ENCODE measurements at regions of chr12 and their contacts with region 1.

Region 1: DNA sequence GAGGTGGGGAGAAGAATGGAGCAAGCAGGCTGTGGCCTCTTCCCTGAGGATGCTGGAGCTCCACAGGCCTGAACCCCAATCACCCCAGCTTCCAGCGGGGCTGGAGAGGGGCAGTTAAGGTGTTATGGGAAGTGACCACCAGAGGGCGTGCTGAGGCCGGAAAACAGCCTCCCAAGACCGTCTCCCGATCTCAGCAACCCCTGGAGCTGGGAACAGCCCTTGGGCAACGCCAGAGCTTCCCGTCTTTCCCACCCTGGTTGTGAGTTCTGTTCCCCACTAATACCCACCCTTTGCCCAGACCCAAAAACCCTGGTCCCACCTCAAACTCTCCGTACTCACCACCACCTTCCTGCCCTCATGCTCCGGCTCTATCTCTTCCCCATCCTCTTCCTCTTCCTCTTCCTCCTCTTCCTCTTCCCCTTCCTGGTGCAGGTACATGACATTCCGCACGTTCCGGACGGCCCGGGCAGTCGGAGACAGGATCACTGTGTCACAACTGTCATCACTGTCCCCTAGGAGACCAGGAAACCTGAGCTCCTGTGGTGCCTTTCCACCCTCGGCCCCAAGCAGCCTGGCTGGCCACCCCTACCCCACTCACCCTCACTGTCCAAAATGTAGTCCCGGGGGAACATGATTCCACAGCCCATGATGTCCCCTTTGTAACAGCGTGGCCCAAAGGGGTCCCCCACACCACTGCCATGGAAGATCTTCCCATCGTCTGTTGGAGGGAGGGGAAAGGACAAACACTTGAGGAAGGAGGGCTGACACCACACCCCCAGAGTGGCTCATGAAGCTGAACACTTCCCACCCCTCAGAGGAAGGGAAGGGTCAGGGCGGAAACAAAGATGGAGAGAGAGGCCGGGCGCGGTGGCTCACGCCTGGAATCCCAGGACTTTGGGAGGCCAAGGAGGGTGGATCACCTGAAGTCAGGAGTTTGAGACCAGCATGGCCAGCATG is 12.9 kb downstream of the SPRYD3 start:
- DNase-seq: peak; percentile 48 to 64 (median 57)
- H3K4me3 ChIP-seq: no peak overlapping the region
- H3K4me3 Mint-ChIP-seq: no peak overlapping the region
- H3K27ac ChIP-seq: no peak overlapping the region
- H3K27ac Mint-ChIP-seq: peak overlapping the region in 6 of 7 donors; percentile 54 to 89 (median 68)
- H3K4me1 ChIP-seq: peaks cover 7% of the 10 kb centered on the region
- H3K4me1 Mint-ChIP-seq: peaks cover 9 to 19% (median 12%) of the 10 kb centered on the region in 4 donors
- H3K27me3 ChIP-seq: no peaks in the 10 kb centered on the region
- H3K27me3 Mint-ChIP-seq: no peaks in the 10 kb centered on the region

Region 2: GRCh38 chr12:53047221-53048042 is 18.8 kb before region 1 on chr12:
- CTCF ChIA-PET with region 1: interaction called, 11 read pairs
- POLR2A ChIA-PET with region 1: interaction called, 7 read pairs
- intact Hi-C with region 1: no loop called
- DNase-seq: peak; percentile 65 to 82 (median 73)
- H3K4me3 ChIP-seq: no peak overlapping the region
- H3K4me3 Mint-ChIP-seq: peak overlapping the region in 7 of 8 donors; percentile 45 to 66 (median 58)
- H3K27ac ChIP-seq: peak overlapping the region; percentile 69
- H3K27ac Mint-ChIP-seq: peak overlapping the region; percentile 25 to 97 (median 68)
- H3K4me1 ChIP-seq: peaks cover 14% of the 10 kb centered on the region
- H3K4me1 Mint-ChIP-seq: peaks cover 5 to 19% (median 12%) of the 10 kb centered on the region in 4 donors
- H3K27me3 ChIP-seq: no peaks in the 10 kb centered on the region
- H3K27me3 Mint-ChIP-seq: no peaks in the 10 kb centered on the region

Region 3: GRCh38 chr12:53079226-53080117 is 13.2 kb after region 1 on chr12 and contains the start of gene SPRYD3:
- CTCF ChIA-PET with region 1: interaction called, 74 read pairs
- POLR2A ChIA-PET with region 1: interaction called, 36 read pairs
- intact Hi-C with region 1: no loop called
- DNase-seq: peak; percentile 96 to 99 (median 97)
- H3K4me3 ChIP-seq: peak within 1 kb of the TSS; percentile 73
- H3K4me3 Mint-ChIP-seq: peak within 1 kb of the TSS; percentile 89 to 97 (median 94)
- H3K27ac ChIP-seq: peak within 1 kb of the TSS; percentile 83
- H3K27ac Mint-ChIP-seq: peak within 1 kb of the TSS; percentile 92 to 98 (median 95)
- H3K4me1 ChIP-seq: peaks cover 29% of the 10 kb centered on the region
- H3K4me1 Mint-ChIP-seq: peaks cover 23 to 61% (median 39%) of the 10 kb centered on the region in 4 donors
- H3K27me3 ChIP-seq: no peaks in the 10 kb centered on the region
- H3K27me3 Mint-ChIP-seq: no peaks in the 10 kb centered on the region
- total RNA-seq, gene SPRYD3: 54.3 to 59.3 TPM

Region 4: DNA sequence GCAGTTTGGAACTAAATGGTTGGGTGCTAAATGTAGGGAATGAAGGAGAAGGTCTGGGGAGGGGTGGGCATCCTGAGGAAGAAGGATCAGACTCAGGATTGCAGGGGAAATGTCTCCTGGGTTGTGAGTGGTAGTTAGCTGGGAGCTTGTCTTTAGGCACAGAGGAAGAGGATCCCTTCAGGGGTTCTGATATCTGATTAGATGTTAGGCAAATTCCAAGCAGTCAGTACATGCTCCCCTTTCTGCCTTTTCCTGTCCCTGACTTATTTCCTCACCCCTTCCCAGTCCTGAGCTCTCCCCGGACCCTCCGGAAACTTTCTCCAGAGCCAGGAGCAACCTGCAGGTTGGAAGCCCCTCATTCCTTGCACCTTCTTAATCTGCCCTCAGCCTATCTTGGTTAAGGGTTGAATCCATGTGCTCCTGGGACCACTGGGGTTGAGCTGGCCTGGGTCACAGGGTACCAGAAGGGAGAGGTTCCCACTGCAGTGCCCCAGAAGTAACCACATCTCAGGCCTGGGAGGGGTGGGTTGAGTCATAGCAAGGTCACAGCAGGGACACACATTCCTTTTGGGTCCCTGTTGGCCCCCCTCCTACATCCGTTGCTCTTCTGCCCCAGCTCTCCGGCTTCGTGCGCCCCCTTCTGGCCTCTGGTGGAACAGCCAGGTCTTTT is 32.9 kb after region 1 on chr12:
- CTCF ChIA-PET with region 1: interaction called, 511 read pairs
- POLR2A ChIA-PET with region 1: interaction called, 26 read pairs
- intact Hi-C with region 1: loop called (anchors 1 kb)
- DNase-seq: peak; percentile 82 to 90 (median 84)
- H3K4me3 ChIP-seq: no peak overlapping the region
- H3K4me3 Mint-ChIP-seq: peak overlapping the region; percentile 39 to 93 (median 62)
- H3K27ac ChIP-seq: no peak overlapping the region
- H3K27ac Mint-ChIP-seq: peak overlapping the region; percentile 68 to 89 (median 85)
- H3K4me1 ChIP-seq: peaks cover 48% of the 10 kb centered on the region
- H3K4me1 Mint-ChIP-seq: peaks cover 36 to 58% (median 47%) of the 10 kb centered on the region in 4 donors
- H3K27me3 ChIP-seq: no peaks in the 10 kb centered on the region
- H3K27me3 Mint-ChIP-seq: no peaks in the 10 kb centered on the region

Region 5: DNA sequence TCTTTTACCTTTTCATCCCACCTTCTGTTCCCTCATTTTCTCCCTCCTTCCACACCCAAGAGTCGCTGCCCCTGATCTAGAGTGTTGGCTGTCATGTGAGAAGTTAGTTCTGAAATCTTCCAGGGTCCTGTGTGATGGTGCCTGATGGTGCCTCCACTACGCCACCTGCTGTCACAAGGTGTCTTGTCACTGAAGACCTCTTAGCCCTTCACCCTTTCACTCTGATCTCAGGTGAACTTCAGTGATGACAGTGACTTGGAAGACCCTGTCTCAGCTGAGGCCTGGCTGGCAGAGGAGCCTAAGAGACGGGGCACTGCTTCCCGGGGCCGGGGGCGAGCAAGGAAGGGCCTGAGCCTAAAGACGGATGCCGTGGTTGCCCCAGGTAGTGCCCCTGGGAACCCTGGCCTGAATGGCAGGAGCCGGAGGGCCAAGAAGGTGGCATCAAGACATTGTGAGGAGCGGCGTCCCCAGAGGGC is 221.5 kb after region 1 on chr12:
- CTCF ChIA-PET with region 1: interaction called, 4 read pairs
- POLR2A ChIA-PET with region 1: no interaction called
- intact Hi-C with region 1: loop called (anchors 5 kb)
- DNase-seq: peak; percentile 68 to 73 (median 72)
- H3K4me3 ChIP-seq: no peak overlapping the region
- H3K4me3 Mint-ChIP-seq: peak overlapping the region in 1 of 8 donors; percentile 32
- H3K27ac ChIP-seq: no peak overlapping the region
- H3K27ac Mint-ChIP-seq: peak overlapping the region in 4 of 7 donors; percentile 3 to 71 (median 34)
- H3K4me1 ChIP-seq: no peaks in the 10 kb centered on the region
- H3K4me1 Mint-ChIP-seq: peaks cover 4 to 7% (median 5%) of the 10 kb centered on the region in 4 donors
- H3K27me3 ChIP-seq: no peaks in the 10 kb centered on the region
- H3K27me3 Mint-ChIP-seq: no peaks in the 10 kb centered on the region

Region 6: GRCh38 chr12:53907103-53907502 is 840.9 kb after region 1 on chr12:
- CTCF ChIA-PET with region 1: no interaction called
- POLR2A ChIA-PET with region 1: no interaction called
- intact Hi-C with region 1: no loop called
- DNase-seq: no peak
- H3K4me3 ChIP-seq: no peak overlapping the region
- H3K4me3 Mint-ChIP-seq: no peak overlapping the region
- H3K27ac ChIP-seq: no peak overlapping the region
- H3K27ac Mint-ChIP-seq: no peak overlapping the region
- H3K4me1 ChIP-seq: no peaks in the 10 kb centered on the region
- H3K4me1 Mint-ChIP-seq: no peaks in the 10 kb centered on the region
- H3K27me3 ChIP-seq: no peaks in the 10 kb centered on the region
- H3K27me3 Mint-ChIP-seq: peaks cover 12 to 25% of the 10 kb centered on the region in 2 donors